ENCODE measurements at regions of chr9 and their contacts with region 1.

Region 1: DNA sequence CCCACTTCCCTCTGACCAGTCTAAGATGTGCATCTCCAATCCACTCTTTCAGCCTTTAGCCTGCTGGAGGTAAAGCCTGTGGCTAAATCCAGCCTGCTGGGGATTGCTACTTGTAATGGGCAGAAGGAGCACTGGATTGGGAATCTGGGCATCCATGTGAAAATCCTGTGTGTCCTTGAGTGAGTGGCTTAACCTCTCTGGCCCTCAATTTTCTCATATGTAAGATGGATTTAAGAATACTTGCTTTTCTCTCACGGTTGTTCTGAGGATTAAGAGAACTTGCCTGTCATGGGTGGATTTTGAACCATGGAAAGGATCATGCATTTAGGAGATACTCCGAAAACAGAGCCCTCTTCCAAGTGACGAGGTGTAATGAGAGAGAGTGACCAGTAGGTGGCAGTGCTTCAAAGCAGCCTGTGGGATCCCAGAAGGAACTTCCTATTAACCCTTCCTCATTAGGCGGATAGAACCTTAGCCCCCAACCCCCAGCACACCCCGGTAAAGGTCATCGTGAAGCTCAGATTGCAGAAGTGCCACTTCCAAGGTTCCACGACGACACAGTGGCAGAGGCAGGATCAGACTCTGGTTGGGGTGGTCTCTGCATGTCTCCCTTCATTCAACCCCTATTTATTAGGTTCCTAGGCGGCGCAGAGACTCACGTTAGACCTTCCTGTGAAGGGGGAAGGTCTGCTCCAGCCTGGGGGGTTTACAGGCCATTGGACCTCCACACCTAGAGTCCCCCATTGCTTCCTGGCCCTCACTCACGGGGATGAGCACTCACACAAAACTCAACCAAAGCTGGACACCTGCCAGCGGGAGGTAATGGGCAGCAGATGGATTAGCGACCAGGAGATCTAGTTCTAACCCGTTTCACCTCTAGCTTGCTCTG is 68.7 kb upstream of the ZNF618 start:
- DNase-seq: no peak
- H3K4me3 ChIP-seq: peak overlapping the region; percentile 33
- CTCF ChIP-seq: peak; percentile 88

Region 2: GRCh38 chr9:113387560-113388230 is 419.7 kb before region 1 on chr9:
- CTCF ChIA-PET with region 1: no interaction called
- POLR2A ChIA-PET with region 1: no interaction called
- DNase-seq: no peak
- H3K4me3 ChIP-seq: no peak overlapping the region
- CTCF ChIP-seq: no peak

Region 3: DNA sequence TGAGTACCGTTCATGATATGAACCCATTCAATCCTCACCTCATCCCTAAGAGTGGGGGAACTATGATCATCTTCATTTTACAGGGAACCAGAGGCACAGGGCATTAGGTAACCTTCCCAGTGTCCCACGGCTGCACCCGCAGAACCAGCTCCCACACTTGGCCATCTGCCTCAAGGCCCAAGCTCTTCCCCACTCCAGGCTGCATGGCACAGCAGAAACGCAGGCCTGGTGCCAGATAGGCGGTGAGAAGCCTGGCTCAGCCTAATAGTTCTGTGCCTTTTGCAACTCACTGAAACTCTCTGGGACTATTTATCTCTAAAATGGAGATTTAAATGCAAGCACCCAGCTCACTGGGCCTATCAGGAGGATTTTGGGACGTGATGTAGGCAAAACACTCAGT is 22.1 kb before region 1 on chr9:
- CTCF ChIA-PET with region 1: interaction called, 36 read pairs
- POLR2A ChIA-PET with region 1: no interaction called
- DNase-seq: no peak
- H3K4me3 ChIP-seq: no peak overlapping the region
- CTCF ChIP-seq: no peak

Region 4: GRCh38 chr9:113828221-113828620 is 20.8 kb after region 1 on chr9:
- CTCF ChIA-PET with region 1: interaction called, 18 read pairs
- POLR2A ChIA-PET with region 1: no interaction called
- DNase-seq: no peak
- H3K4me3 ChIP-seq: no peak overlapping the region
- CTCF ChIP-seq: no peak

Region 5: DNA sequence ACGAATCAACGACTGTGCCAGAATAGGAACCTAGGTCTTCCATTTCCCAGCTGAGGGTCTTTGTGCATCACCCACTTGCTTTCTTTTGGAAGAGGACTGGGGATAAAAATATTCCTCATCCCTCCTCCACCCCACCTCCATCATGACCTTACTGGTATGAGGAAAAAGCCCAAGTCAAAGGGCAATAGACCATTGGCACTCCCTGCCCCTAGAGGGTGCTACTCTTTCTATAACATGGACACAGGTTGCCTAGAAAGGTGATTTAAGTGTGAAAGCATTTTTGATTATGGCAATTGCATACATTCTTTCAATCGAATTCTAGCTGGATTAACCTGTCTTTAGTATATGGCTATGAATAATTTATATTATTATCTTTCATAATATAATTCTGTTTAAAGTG is 45.9 kb after region 1 on chr9:
- CTCF ChIA-PET with region 1: interaction called, 12 read pairs
- POLR2A ChIA-PET with region 1: no interaction called
- DNase-seq: no peak
- H3K4me3 ChIP-seq: no peak overlapping the region
- CTCF ChIP-seq: peak; percentile 13

Region 6: DNA sequence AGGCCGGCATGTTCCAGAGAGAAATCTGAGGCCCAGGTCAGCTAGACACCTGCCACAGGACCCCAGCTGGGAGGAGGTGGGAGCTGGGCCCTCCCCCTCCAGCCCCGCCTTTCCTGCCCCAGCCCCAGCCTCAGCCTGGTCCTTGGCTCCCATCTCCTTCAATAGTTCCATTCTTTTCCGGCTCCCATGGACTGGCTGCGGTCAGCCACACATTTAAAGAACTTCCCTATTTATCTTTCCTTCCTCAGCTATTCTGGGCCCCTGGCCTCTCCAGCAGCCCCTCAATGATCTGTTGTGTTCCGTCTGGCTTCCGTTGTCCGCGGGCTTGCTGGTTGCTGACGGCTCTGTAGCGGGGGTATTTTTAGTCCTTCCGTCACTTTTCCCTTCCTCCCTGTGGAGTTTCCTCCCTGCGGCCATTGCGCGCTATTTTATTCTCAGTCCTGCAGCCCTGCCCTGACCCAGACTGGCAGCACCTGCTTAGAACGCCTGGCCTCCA is 196.9 kb after region 1 on chr9:
- CTCF ChIA-PET with region 1: interaction called, 13 read pairs
- POLR2A ChIA-PET with region 1: no interaction called
- DNase-seq: no peak
- H3K4me3 ChIP-seq: no peak overlapping the region
- CTCF ChIP-seq: no peak

Measured in AG04449 (cell line).